Mammary epithelial cell (primary cell): ENCODE measurements at regions of chr4 and their contacts with region 1.

Region 1: DNA sequence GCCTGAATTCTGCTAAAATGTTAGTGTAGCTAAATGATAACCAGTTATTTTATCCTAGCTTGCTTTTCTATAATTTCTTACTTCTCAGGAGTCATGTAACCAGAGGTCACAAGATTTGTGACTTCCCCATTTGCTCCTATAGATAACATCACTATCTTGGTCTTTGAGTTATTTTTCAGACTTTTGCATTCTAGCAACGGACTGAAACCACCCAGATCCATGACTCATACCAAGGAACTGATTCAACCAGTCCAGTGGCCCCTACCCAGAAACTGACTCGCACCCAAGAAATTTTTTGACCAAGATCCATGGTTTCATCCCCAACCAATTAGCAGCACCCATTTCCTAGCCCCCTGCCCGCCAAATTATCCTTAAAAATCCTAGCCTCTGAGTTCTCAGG is 50.0 kb downstream of the IQCM start:
- DNase-seq: peak; percentile 75
- H3K4me3 ChIP-seq: no peak overlapping the region
- H3K27ac ChIP-seq: peak overlapping the region; percentile 67
- H3K4me1 ChIP-seq: peaks cover 20% of the 10 kb centered on the region
- H3K27me3 ChIP-seq: no peaks in the 10 kb centered on the region
- CTCF ChIP-seq: no peak

Region 2: DNA sequence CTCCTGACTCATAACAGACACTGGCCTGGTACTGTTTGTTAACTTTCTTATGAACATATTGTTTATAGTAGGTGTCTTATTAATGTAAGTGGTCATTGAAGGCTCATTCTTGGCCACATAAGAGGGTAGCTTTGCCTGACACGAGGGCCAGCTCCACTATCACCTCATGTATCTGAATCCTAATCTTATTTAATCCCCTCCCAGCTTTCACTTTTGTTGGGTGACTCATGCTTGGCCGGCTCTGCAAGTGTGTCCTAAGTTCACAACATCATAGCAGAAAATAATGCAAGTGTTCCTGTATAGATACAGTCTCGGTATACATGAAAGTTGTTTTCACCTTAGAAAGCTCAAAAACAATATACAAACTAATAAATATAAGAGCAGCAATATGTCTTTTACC is 233.8 kb before region 1 on chr4:
- CTCF ChIA-PET with region 1: no interaction called
- dilution Hi-C with region 1: no loop called
- in situ Hi-C with region 1: no loop called
- intact Hi-C with region 1: no loop called
- DNase-seq: no peak
- H3K4me3 ChIP-seq: no peak overlapping the region
- H3K27ac ChIP-seq: no peak overlapping the region
- H3K4me1 ChIP-seq: no peaks in the 10 kb centered on the region
- H3K27me3 ChIP-seq: no peaks in the 10 kb centered on the region
- CTCF ChIP-seq: no peak

Region 3: DNA sequence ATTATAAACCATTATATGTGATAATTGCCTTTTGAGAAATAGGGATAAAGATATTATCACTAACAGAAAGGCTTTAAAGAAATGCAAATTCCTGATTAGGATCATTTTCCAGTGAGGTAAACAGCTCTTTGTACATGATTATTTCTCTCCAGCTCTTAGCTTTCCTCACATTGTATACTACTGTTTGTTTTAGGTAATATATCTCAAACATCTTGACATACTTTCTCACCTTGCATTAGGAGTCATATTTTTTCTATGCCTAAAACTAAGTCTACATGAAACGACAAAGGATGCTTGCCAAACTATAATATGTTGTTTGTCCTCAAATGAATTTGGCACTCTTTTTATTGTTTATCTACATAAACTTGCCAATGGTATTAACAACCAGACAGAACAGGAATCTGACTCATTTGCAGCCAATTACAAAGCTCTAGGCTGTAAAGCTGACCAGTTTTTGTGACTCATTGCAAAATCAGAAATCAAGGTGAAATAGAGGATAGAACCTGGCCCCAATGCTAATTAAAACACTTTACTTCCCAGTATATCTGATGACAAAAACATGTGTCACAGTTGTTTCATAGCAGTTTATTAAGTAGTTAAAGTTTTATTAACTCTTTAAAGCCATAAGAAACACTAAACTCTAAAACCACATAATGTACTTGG is 57.0 kb before region 1 on chr4:
- CTCF ChIA-PET with region 1: no interaction called
- dilution Hi-C with region 1: no loop called
- in situ Hi-C with region 1: no loop called
- intact Hi-C with region 1: loop called (anchors 2 kb)
- DNase-seq: peak; percentile 83
- H3K4me3 ChIP-seq: no peak overlapping the region
- H3K27ac ChIP-seq: no peak overlapping the region
- H3K4me1 ChIP-seq: peaks cover 15% of the 10 kb centered on the region
- H3K27me3 ChIP-seq: no peaks in the 10 kb centered on the region
- CTCF ChIP-seq: no peak